Activated CD8-positive, alpha-beta T cell treated with anti-CD3 and anti-CD28 coated beads for 36 hours (primary cell): ENCODE measurements at regions of chr4 and their contacts with region 1.

Region 1: GRCh38 chr4:83110223-83110945 is 4.1 kb downstream of the PLAC8 start:
- DNase-seq: peak; percentile 97
- ATAC-seq: peak; percentile 75
- H3K4me3 Mint-ChIP-seq: peak overlapping the region; percentile 84
- H3K27ac Mint-ChIP-seq: peak overlapping the region; percentile 96
- H3K4me1 Mint-ChIP-seq: peaks cover 35% of the 10 kb centered on the region
- H3K27me3 Mint-ChIP-seq: no peaks in the 10 kb centered on the region
- CTCF ChIP-seq: peak; percentile 45

Region 2: GRCh38 chr4:83074086-83074704 is 36.2 kb before region 1 on chr4:
- CTCF ChIA-PET with region 1: interaction called, 18 read pairs
- POLR2A ChIA-PET with region 1: interaction called, 11 read pairs
- intact Hi-C with region 1: loop called (anchors 5 kb)
- DNase-seq: peak; percentile 67
- ATAC-seq: peak; percentile 91
- H3K4me3 Mint-ChIP-seq: peak overlapping the region; percentile 45
- H3K27ac Mint-ChIP-seq: peak overlapping the region; percentile 47
- H3K4me1 Mint-ChIP-seq: peaks cover 5% of the 10 kb centered on the region
- H3K27me3 Mint-ChIP-seq: no peaks in the 10 kb centered on the region
- CTCF ChIP-seq: peak; percentile 75

Region 3: DNA sequence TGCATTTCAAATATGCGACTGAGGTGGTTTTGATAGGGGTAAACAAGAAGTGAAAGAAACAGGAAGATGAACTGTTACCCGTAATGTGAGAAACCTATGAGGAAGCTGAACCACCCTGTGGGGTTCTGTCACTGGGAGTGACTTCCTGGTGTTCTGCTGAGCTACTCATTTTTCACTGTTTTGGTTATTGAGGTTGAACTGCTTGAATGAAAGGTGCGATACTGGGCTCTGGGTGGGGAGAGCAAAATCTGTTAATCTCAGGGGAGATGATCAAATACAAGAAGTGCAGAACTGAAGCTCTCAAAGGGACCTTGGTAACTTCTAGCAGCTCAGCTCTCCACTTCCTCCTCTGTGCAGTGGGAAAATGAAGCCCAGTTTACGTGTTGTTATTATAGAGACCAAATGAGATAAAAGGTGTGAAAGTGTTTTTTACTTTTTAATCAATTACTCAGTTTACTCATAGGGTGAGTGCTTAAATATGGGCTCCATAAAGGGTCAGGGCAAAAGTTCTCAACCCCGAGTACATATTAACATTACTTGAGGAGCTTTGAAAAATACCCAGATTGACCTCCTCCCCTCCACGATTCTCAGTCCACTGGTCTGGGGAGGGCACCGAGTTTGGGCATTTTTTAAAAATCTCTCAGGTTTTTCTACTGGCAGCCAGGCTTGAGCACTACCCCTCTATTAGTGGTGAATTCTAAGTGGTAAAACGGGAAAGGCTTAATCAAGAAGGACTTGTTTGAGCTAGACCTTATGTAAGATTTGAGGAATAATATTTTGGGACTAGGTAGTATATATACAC is 107.5 kb after region 1 on chr4:
- CTCF ChIA-PET with region 1: interaction called, 23 read pairs
- POLR2A ChIA-PET with region 1: interaction called, 27 read pairs
- intact Hi-C with region 1: loop called (anchors 1 kb)
- DNase-seq: peak; percentile 82
- ATAC-seq: peak; percentile 86
- H3K4me3 Mint-ChIP-seq: peak overlapping the region; percentile 67
- H3K27ac Mint-ChIP-seq: peak overlapping the region; percentile 91
- H3K4me1 Mint-ChIP-seq: peaks cover 72% of the 10 kb centered on the region
- H3K27me3 Mint-ChIP-seq: no peaks in the 10 kb centered on the region
- CTCF ChIP-seq: no peak

Region 4: DNA sequence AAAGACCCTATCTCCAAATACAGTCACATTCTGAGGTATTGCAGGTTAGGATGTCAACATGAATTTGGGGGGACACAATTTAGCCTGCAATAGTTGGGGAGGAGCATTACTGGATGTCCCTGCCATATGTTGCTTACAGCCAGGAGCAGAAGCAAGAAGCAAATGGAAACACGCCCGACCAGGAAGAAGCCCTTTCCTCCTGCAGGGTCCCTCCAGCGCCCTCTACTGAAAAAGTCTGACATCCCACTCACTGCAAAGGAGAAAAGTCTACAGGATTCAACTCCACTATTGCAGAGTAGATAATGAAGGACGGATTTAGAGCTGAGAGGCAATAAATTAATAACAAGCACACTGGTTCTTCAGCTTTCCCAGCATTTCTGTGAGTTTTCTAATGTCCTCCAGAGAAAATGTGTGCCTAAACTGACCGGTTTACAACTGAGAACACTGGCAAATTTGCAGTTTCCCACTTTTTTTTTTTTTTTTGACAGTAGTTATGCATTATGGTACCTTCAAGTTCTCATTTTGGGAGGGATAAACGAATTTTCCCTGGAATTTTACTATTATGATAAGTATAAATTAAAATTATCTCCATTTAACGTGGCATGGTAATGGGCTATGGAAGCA is 142.5 kb after region 1 on chr4:
- CTCF ChIA-PET with region 1: interaction called, 31 read pairs
- POLR2A ChIA-PET with region 1: interaction called, 4 read pairs
- intact Hi-C with region 1: no loop called
- DNase-seq: peak; percentile 84
- ATAC-seq: peak; percentile 88
- H3K4me3 Mint-ChIP-seq: no peak overlapping the region
- H3K27ac Mint-ChIP-seq: no peak overlapping the region
- H3K4me1 Mint-ChIP-seq: peaks cover 21% of the 10 kb centered on the region
- H3K27me3 Mint-ChIP-seq: no peaks in the 10 kb centered on the region
- CTCF ChIP-seq: peak; percentile 90